ENCODE measurements at regions of chrX and their contacts with region 1.

Region 1: GRCh38 chrX:24371391-24371972 is 11.0 kb downstream of the SUPT20HL1 start:
- DNase-seq: peak; percentile 15 to 74 (median 55)
- ATAC-seq: peak; percentile 69
- H3K4me3 ChIP-seq: no peak overlapping the region
- H3K4me3 Mint-ChIP-seq: peak overlapping the region; percentile 59
- H3K27ac ChIP-seq: no peak overlapping the region
- H3K27ac Mint-ChIP-seq: no peak overlapping the region
- H3K4me1 ChIP-seq: no peaks in the 10 kb centered on the region
- H3K4me1 Mint-ChIP-seq: peaks cover 9% of the 10 kb centered on the region
- H3K27me3 ChIP-seq: no peaks in the 10 kb centered on the region
- H3K27me3 Mint-ChIP-seq: peaks cover 4% of the 10 kb centered on the region
- CTCF ChIP-seq: peak; percentile 52

Region 2: GRCh38 chrX:24395775-24396174 is 24.3 kb after region 1 on chrX:
- CTCF ChIA-PET with region 1: interaction called, 14 read pairs
- POLR2A ChIA-PET with region 1: no interaction called
- intact Hi-C with region 1: no loop called
- DNase-seq: peak in 6 of 9 experiments; percentile 3 to 78 (median 42)
- ATAC-seq: peak; percentile 88
- H3K4me3 ChIP-seq: no peak overlapping the region
- H3K4me3 Mint-ChIP-seq: no peak overlapping the region
- H3K27ac ChIP-seq: no peak overlapping the region
- H3K27ac Mint-ChIP-seq: no peak overlapping the region
- H3K4me1 ChIP-seq: no peaks in the 10 kb centered on the region
- H3K4me1 Mint-ChIP-seq: peaks cover 2% of the 10 kb centered on the region
- H3K27me3 ChIP-seq: no peaks in the 10 kb centered on the region
- H3K27me3 Mint-ChIP-seq: peaks cover 17% of the 10 kb centered on the region
- CTCF ChIP-seq: peak; percentile 60